Posterior cingulate gyrus (tissue), 11 donors: ENCODE measurements at regions of chr14 and their contacts with region 1.

Region 1: GRCh38 chr14:75307700-75308379 is 29.2 kb downstream of the FOS start:
- DNase-seq: peak; percentile 74 to 98 (median 90)

Region 2: GRCh38 chr14:75487155-75487671 is 179.4 kb after region 1 on chr14:
- intact Hi-C with region 1: loop called (anchors 1 kb)
- DNase-seq: no peak

Region 3: GRCh38 chr14:75560962-75561432 is 253.2 kb after region 1 on chr14:
- intact Hi-C with region 1: loop called (anchors 5 kb)
- DNase-seq: peak in 8 of 10 donors; percentile 47 to 93 (median 61)